ENCODE measurements at regions of chr1 and their contacts with region 1.

Region 1: GRCh38 chr1:55140546-55140983 is 74.6 kb downstream of the USP24 start:
- DNase-seq: no peak
- H3K4me3 ChIP-seq: no peak overlapping the region
- H3K27ac ChIP-seq: peak overlapping the region; percentile 12
- H3K4me1 ChIP-seq: no peaks in the 10 kb centered on the region
- H3K27me3 ChIP-seq: no peaks in the 10 kb centered on the region
- CTCF ChIP-seq: peak; percentile 59 to 70 (median 59)
- POLR2A ChIP-seq: no peak

Region 2: GRCh38 chr1:55195521-55196233 is 55.1 kb after region 1 on chr1:
- intact Hi-C with region 1: no loop called
- DNase-seq: no peak
- H3K4me3 ChIP-seq: no peak overlapping the region
- H3K27ac ChIP-seq: no peak overlapping the region
- H3K4me1 ChIP-seq: peaks cover 29% of the 10 kb centered on the region
- H3K27me3 ChIP-seq: no peaks in the 10 kb centered on the region
- CTCF ChIP-seq: no peak
- POLR2A ChIP-seq: no peak

Region 3: DNA sequence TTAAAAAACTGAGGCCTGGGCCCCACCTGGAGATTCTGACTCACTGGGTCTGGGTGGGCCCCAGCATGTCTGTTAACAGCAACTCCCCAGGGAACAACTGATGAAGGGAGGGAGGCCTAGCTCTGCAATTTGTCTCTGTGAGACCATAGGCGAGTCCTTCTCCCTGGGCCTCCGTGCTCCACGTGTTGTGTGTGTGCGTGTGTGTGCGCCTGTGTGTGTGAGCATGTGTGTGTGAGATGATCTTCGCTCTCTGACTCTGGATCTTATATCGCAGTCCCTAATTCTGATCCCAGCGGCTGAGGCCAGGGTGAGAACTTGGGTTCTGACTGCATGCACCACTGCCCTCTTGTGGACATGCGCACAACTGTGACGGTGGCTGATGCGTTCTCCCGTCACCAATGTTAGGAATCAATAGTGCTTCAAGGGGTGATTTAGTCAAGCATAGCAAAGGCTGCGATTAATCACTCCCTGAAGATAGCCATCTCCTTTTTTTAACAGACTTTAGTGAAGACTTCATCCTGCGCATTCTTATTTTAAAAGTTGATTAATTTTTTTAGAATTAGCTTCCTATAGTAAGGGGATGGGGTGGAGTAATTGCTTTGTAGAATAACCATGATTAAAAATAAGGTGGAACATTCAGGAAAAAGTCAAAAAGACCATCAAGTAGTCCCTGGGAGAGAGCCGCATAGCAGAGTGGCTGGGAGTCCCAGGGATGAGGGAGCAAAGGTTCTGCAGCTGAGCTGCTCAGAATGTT is 137.0 kb after region 1 on chr1:
- intact Hi-C with region 1: loop called (anchors 1 kb)
- DNase-seq: no peak
- H3K4me3 ChIP-seq: no peak overlapping the region
- H3K27ac ChIP-seq: no peak overlapping the region
- H3K4me1 ChIP-seq: peaks cover 10% of the 10 kb centered on the region
- H3K27me3 ChIP-seq: no peaks in the 10 kb centered on the region
- CTCF ChIP-seq: peak; percentile 44 to 86 (median 80)
- POLR2A ChIP-seq: no peak